Sciatic nerve (tissue), 2 donors: ENCODE measurements at regions of chr17 and their contacts with region 1.

Region 1: GRCh38 chr17:35002876-35003518 is 22.7 kb downstream of the LIG3 start:
- DNase-seq: no peak
- ATAC-seq: no peak

Region 2: DNA sequence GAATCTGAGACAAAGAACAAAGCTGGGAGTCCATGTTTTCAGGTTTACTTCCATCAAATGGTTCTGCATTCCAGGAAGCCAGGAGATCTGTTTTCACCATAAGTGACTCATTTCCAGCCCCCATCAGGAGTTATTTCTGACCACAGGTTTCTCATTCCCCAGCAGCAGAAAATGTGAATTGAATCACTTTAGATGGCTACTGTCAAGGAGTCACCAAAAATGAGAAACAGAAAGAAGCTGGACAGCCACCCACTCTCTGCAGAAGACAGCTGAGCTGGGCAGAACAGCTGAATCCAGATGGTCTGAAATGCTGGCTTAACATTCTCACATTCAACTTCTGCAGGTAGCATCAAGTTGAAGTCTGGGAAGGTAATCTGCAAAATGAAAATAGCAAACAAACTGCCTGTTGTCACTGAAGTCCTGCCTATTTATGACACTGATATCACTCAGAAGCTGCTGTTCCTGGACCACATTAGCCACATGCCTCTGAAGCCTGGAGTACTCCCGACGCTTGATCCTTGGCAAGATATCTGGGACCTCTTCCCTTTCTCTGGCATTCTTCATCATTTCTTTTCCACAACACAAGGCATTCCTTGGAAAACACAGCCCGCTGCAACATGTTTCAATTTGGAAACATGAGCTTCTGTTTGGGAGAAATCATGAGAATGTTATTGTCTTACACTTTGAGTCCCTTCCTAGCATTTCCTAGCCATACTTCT is 702.2 kb before region 1 on chr17:
- intact Hi-C with region 1: no loop called
- DNase-seq: no peak
- ATAC-seq: peak; percentile 72

Region 3: DNA sequence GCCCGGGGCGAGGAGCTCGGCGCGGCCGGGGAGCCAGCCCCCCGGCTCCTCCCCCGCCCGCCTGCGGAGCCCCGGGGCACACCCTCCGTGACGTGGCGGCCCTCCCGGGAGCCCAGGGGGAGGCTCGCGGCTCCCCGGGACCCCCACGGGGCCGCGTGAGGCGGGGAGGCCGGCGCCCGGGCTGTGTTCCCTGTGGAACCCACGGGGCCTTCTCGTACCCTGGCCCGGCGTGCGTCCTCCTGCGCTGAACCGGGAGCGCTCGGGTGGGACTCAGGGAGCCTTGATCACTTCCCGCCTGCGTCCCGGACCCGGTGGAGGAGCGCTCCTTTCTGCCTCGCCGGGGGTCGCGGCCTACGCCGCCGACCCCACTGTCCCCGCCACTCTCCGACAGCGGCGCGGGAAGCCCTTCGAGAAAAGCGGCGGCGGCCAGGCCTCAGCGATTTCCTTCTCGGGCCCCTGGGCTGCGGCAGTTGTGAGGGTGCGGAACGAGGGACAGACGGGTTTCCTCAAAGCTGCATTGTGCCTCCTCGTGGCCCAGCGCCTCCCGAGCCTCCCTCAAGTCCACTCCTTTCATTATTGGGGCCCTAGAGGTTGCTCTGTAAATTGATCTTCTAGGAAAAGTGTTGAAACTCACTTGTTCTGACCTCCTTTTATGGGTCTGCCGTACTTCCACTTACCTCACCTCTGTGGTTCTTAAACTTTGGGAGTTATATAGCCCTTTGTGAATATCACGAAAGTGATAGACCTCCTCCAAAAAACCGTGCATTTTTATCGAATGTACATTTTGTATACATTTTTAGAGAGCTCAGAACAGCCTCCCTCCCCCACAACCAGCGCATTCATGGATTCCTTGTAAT is 22.1 kb before region 1 on chr17:
- intact Hi-C with region 1: no loop called
- DNase-seq: peak; percentile 84
- ATAC-seq: peak; percentile 89

Region 4: DNA sequence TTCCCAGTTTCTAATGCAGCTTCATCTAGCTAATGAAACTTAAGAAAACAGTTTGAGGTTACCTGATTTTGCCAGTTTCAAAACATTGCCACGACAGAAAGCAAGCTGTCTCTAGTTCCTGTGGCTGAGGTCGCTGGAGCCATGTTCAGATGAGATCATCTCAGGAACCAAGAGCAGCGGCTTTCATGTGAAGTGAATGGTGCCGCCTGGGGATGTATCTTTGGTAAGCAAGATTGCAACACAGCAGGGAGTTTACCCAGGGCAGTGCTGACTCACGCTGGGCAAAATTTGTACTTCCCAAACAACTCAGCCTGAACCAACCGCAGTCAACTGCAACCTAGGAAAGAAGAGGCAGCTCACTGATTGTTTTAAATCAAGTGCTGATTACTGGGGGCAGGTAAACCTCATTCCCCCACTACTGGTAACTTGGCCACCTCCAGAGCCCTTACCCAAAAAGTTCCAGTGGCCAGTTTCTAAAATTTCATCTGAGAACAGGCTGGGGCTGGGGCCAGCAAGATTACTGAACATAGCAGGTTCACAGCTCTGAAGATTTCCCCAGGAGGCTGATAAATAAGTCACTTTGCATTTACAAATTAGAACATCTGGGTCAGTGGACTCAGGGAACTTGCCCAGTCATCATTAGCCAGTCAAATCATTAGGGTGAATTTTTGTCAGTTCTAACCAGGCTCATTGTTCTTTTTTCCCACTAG is 60.7 kb after region 1 on chr17 and contains the start of gene RFFL:
- intact Hi-C with region 1: no loop called
- DNase-seq: peak; percentile 88
- ATAC-seq: peak; percentile 100
- total RNA-seq, gene RFFL: 23.3 TPM

Region 5: GRCh38 chr17:35089586-35090296 is 86.7 kb after region 1 on chr17:
- intact Hi-C with region 1: loop called (anchors 10 kb)
- DNase-seq: no peak
- ATAC-seq: peak; percentile 43